Activated T-helper 2 cell treated with anti-CD3 and anti-CD28 coated beads, Interferon-gamma antibody, Interleukin-2, Interleukin-4, amounts not matched to agents 10 μg/mL and 5 μg/mL and 100 μg/mL, durations not matched to agents 14 hours and 24 hours and 36 hours (primary cell): ENCODE measurements at regions of chr1 and their contacts with region 1.

Region 1: DNA sequence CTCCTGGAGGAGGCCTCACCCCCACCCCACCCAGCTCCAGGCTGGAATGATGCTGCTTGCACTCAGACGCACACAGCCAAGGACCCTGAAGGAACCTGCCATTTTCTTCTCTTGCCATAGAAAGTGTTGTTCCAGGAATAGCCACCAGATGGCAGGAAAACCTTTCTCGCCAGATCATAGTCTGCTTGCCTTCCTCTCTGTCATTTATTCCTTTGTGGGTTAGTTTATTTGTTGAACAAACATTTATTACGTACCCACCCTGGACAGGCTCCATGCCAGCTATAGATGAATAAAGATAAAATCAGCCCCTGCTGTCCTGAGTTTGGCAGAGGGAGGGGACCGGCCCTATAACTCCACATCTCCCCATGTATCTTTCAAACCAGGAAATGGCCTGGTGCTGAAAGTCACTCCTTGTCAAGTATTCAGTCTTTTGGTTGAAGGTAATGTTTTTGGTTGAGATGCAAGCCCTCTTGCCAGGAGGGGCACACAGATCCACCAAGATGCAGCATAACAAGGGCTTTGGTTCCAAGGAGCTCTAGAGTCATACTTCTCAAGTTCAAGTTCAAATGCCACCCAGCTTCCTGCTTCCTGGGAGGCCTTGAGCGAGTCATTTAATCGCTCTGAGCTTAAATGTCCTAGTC is 7.0 kb upstream of the KCNC4 start:
- DNase-seq: peak; percentile 59
- H3K4me3 Mint-ChIP-seq: no peak overlapping the region
- H3K27ac Mint-ChIP-seq: peak overlapping the region; percentile 91
- H3K4me1 Mint-ChIP-seq: peaks cover 16% of the 10 kb centered on the region
- H3K27me3 Mint-ChIP-seq: no peaks in the 10 kb centered on the region

Region 2: GRCh38 chr1:110312188-110313121 is 109.3 kb after region 1 on chr1:
- intact Hi-C with region 1: loop called (anchors 1 kb)
- DNase-seq: peak; percentile 50
- H3K4me3 Mint-ChIP-seq: no peak overlapping the region
- H3K27ac Mint-ChIP-seq: no peak overlapping the region
- H3K4me1 Mint-ChIP-seq: no peaks in the 10 kb centered on the region
- H3K27me3 Mint-ChIP-seq: no peaks in the 10 kb centered on the region

Region 3: GRCh38 chr1:110328274-110328673 is 125.1 kb after region 1 on chr1:
- intact Hi-C with region 1: no loop called
- DNase-seq: no peak
- H3K4me3 Mint-ChIP-seq: no peak overlapping the region
- H3K27ac Mint-ChIP-seq: no peak overlapping the region
- H3K4me1 Mint-ChIP-seq: no peaks in the 10 kb centered on the region
- H3K27me3 Mint-ChIP-seq: peaks cover 4% of the 10 kb centered on the region

Region 4: GRCh38 chr1:110338886-110339406 is 135.8 kb after region 1 on chr1 and contains the start of gene RBM15:
- intact Hi-C with region 1: loop called (anchors 2 kb)
- DNase-seq: peak; percentile 98
- H3K4me3 Mint-ChIP-seq: no peak within 1 kb of the TSS
- H3K27ac Mint-ChIP-seq: no peak within 1 kb of the TSS
- H3K4me1 Mint-ChIP-seq: peaks cover 52% of the 10 kb centered on the region
- H3K27me3 Mint-ChIP-seq: no peaks in the 10 kb centered on the region
- total RNA-seq, gene RBM15: 55.5 TPM in 2 replicates

Region 5: DNA sequence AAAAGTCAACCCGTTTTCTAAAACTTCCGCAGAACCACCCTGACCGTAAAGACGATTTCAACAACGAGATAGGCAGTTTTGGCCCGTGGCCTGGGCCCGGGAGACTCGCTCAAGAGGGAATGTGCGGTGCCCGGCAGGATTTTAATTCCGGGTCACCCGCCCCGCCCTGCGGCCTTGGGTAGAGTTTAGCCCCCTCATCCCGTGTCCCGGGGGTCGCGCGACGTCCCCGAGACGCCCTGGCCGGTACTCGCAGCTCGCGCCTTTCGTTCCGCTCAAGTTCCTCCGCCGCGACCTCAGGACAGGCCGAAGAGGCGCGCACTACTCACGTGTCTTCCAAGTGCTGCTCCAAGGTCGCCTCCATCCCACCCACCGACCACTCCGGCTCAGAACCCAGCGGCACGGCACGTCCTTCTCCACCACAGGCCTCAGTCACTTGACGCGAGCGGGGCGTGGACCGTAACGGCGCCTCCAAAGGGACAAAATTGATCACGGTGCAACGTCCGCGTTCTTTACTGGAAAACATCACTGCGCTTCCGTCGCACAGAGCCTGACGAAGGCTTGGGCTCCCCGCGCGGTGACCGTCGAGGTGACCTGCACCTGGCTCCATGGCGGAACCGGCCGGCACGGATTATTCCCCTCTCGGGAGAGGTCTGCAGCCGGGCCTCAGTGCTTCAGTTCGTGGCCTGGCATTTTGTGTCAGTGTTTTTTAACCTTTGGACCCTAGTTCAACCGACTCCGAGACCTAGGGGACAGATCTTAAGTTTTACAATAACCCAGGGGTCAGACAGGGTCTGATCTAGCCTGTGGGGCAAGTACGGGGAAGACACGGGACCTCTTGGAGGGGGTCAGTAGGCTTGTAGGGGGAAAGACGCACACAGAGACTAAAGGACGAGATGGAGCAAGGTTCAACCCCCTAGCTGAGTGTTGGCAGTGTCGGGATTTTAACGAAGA is 204.4 kb after region 1 on chr1 and contains the start of gene LAMTOR5:
- intact Hi-C with region 1: loop called (anchors 2 kb)
- DNase-seq: peak; percentile 90
- H3K4me3 Mint-ChIP-seq: peak within 1 kb of the TSS; percentile 96
- H3K27ac Mint-ChIP-seq: peak within 1 kb of the TSS; percentile 97
- H3K4me1 Mint-ChIP-seq: peaks cover 16% of the 10 kb centered on the region
- H3K27me3 Mint-ChIP-seq: no peaks in the 10 kb centered on the region
- total RNA-seq, gene LAMTOR5: 170 and 171 TPM in 2 replicates

Region 6: DNA sequence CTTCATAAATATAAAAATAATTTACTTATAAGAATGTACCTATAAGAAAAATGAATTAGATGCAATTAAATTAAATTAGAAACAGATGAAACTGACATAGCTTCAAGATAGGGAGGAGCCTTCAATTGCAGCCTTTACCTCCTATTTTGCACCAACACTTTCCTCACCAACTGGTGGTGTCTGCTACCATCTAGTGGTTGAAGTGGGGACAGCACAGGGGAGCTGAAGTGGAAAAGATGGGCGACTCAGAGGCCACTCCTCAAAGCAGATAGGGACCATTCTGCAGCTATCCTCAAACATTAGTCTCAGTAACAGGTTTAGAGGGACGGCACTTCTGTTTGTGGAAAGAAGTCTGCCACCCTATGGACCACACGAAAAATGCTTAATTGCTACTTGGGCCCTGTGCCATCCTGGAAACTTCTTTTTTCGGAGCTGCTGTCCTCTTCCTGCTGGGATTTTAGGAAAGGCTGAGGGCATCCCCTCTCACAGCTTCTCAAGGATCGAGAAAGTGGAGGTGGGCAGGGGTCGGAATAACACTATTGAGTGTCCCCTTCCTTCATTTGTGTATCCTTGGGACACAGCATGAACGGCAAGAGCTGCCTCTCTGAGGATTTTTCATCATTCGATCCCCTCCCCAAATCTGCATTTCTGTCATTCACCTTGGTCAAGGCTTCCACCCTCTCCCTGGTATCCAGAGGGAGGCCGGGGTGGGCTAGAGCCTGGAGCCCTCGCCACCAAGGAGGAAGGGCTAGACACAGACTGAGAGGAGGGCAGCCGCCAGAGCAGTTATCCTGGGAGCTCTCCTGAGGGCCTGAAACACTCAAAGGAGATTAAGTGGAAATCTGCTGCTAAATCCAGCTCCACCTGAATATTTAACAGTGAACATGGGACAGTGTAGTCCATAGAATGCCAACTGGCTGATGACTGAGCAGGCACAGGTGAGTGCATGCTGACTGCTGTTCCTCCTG is 257.4 kb after region 1 on chr1:
- intact Hi-C with region 1: loop called (anchors 1 kb)
- DNase-seq: peak; percentile 72
- H3K4me3 Mint-ChIP-seq: no peak overlapping the region
- H3K27ac Mint-ChIP-seq: no peak overlapping the region
- H3K4me1 Mint-ChIP-seq: no peaks in the 10 kb centered on the region
- H3K27me3 Mint-ChIP-seq: no peaks in the 10 kb centered on the region

Region 7: GRCh38 chr1:110495926-110496600 is 292.9 kb after region 1 on chr1:
- intact Hi-C with region 1: loop called (anchors 1 kb)
- DNase-seq: peak; percentile 58
- H3K4me3 Mint-ChIP-seq: no peak overlapping the region
- H3K27ac Mint-ChIP-seq: no peak overlapping the region
- H3K4me1 Mint-ChIP-seq: no peaks in the 10 kb centered on the region
- H3K27me3 Mint-ChIP-seq: peaks cover 4% of the 10 kb centered on the region